ENCODE measurements at regions of chr7 and their contacts with region 1.

Region 1: GRCh38 chr7:55594870-55595269 is 22.6 kb upstream of the VOPP1 start:
- DNase-seq: no peak
- H3K4me3 ChIP-seq: no peak overlapping the region
- H3K27ac ChIP-seq: no peak overlapping the region
- H3K4me1 ChIP-seq: no peaks in the 10 kb centered on the region
- H3K27me3 ChIP-seq: no peaks in the 10 kb centered on the region
- CTCF ChIP-seq: no peak
- POLR2A ChIP-seq: no peak

Region 2: GRCh38 chr7:55432939-55433784 is 161.7 kb before region 1 on chr7:
- intact Hi-C with region 1: loop called (anchors 5 kb)
- DNase-seq: no peak
- H3K4me3 ChIP-seq: no peak overlapping the region
- H3K27ac ChIP-seq: peak overlapping the region; percentile 2 to 68
- H3K4me1 ChIP-seq: peaks cover 19% of the 10 kb centered on the region
- H3K27me3 ChIP-seq: no peaks in the 10 kb centered on the region
- CTCF ChIP-seq: peak in 3 of 4 experiments; percentile 43 to 61 (median 43)
- POLR2A ChIP-seq: no peak